ENCODE measurements at regions of chr6 and their contacts with region 1.

Region 1: DNA sequence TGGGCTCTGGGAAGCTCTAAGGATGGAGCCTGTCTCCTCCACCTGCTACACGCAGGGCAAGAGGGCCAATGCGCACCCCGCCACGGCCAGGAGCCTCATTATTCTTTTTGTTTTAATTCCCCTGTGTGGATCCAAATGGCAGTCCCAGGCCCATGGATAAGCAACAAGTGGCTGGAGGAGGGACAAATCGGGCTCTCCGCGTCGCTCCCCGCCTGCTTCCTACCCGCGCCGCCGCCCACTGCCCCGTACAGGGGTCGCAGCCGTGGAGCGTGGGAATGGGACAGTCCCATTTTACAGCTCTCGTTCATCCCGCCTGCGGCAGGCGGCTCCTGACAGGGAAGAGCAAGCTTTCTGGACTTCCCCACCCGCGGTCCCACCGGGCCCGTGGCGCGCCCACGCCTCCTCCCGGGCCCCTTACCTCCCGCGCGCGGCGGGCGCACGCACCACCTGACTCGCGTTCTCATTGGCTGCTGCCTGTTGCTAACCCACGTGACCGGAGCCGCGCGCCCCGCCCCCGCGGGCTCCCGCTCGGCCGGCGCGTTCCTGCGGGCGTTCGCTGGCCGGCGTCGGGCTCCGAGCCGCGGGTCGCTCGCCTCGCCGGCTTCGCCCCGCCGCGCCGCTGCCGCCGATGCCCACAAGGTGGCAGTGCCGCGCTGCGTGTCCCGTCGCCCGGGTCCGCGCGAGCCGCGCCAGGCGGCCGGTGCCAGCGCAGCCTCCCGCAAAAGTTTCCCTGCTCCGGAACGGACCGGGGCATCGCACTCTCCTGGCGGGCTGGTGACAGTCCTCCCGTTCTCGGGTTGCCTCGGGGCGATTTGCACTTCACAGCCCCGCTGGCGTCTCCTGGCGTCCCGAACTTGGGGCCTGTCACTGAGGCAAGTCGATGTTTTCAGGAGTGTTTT is 93.3 kb downstream of the CD83 start:
- DNase-seq: peak; percentile 95 to 98 (median 98)
- ATAC-seq: peak; percentile 97
- H3K4me3 ChIP-seq: peak overlapping the region; percentile 71
- H3K27ac ChIP-seq: peak overlapping the region; percentile 78
- H3K4me1 ChIP-seq: peaks cover 6% of the 10 kb centered on the region
- H3K27me3 ChIP-seq: no peaks in the 10 kb centered on the region

Region 2: GRCh38 chr6:14423330-14423729 is 212.4 kb after region 1 on chr6:
- intact Hi-C with region 1: loop called in 1 of 4 experiments (anchors 10 kb)
- DNase-seq: peak in 1 of 3 donors; percentile 28
- ATAC-seq: peak; percentile 81 to 97
- H3K4me3 ChIP-seq: no peak overlapping the region
- H3K27ac ChIP-seq: no peak overlapping the region
- H3K4me1 ChIP-seq: no peaks in the 10 kb centered on the region
- H3K27me3 ChIP-seq: no peaks in the 10 kb centered on the region

Region 3: DNA sequence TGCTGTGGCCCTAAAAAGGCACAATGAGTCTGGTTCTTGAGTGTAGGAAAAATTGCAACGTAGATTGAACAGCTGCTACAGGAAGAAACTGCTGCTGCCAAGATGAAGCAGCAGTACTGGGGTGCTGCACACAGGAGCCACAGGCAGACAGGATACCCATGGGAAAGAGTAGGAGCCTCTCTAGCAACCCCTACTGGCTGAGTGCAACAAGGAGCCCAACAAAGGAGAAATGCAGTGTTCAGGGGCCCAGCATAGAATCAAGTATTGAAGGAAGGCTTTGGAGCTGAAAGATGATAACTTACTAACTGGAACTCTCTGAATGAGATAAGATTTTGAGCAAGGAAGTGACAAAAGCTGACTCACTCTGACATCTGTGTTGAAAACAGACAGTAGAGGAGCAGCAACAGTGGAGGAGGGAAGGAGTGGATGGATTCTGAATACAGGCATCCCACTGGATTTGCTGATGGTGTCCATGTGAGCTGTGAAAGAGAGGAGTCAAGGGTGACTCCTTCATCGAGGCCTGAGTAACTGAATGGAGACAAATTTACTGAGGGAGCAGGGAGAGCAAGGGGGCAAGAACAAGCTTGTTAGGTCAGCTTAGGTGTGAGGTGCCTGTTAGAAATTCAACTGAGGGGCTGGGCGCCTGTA is 500.3 kb after region 1 on chr6:
- intact Hi-C with region 1: loop called in 1 of 4 experiments (anchors 10 kb)
- DNase-seq: no peak
- ATAC-seq: peak in 1 of 2 donors; percentile 49
- H3K4me3 ChIP-seq: no peak overlapping the region
- H3K27ac ChIP-seq: no peak overlapping the region
- H3K4me1 ChIP-seq: peaks cover 11% of the 10 kb centered on the region
- H3K27me3 ChIP-seq: no peaks in the 10 kb centered on the region

Region 4: DNA sequence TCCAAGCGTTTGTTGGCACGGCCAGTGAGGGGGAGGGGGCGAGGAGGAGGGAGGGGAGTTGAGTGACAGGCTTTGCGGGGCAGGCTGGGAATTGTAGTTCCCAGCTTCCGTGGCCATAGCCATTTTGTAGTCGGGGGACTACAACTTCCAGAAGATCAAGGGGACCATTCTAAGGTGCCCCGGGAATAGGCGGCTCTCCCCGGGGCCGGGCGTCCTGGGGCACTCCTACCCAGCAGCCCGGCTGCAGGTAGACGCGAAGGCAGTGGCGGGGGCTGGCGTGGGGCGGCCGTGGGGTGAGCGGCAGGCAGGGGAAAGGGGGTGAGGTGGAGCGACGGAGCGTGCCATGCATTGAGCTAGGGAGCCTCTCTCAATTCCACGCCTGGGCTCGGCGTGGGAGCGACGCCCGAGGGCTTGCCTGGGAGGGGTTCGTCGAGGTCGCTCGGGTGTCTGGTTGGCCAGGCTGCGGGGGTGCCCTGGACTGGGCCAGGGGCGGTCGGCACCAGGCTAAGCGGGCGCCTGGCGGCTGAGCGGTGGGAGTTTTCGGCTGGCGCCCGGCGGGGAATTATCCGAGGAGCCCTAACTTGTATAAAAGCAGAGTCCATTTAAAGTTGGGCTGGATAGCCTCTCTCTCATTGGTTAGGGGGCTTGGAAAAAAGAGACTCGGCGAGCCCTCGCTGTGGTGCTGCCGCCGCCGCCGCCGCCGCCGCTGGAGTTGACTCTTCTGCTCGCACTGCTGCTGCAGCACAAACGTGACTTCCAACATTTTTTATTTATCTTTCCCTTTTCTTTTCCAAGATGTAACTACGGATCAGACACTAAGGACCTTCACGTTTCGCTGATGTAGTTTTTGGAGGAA is 1034.7 kb after region 1 on chr6 and contains the start of gene JARID2:
- intact Hi-C with region 1: loop called in 1 of 4 experiments (anchors 10 kb)
- DNase-seq: peak; percentile 99 to 100 (median 100)
- ATAC-seq: peak; percentile 91 to 92
- H3K4me3 ChIP-seq: peak within 1 kb of the TSS; percentile 89
- H3K27ac ChIP-seq: peak within 1 kb of the TSS; percentile 95
- H3K4me1 ChIP-seq: no peaks in the 10 kb centered on the region
- H3K27me3 ChIP-seq: no peaks in the 10 kb centered on the region
- total RNA-seq, gene JARID2: 6.8 to 10.1 (median 9.4) TPM

Region 5: DNA sequence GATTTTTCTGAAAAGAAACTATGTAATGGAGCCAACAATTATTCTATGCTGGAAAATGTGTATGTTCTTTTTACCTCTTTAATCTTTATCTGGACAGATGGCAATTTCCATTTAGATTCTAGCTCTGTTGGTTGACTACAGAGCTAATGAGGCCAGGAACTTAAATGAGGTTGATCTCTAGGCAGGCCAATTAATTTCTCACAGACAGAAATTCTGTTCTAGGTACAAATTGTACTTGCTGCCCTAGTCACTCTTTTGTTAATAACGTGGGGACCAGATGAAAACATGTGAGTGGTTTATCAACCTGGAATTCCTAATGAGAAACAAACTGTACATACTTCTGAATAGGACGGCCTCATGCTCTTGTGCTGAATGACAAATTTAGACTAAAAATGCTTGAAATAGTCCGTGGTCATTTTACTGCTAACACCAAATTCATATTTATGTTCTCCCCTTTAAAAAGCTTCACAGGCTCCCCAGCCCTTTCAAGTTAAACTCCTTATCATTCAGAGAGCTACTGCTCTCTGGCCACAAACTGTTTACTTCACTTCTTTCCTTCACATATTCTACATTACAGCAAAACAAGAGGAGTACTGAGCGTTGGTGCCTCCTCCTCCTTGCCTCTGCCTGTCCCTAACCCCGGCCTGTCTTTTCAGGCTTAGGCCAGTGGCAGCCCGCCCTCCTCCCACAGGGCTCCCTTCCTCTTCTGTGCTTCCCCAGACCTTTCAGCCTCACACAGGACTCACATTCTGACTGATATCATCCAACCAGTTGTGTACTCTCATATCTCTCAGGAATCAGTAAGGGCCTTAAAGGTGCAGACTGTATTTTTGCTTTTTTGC is 1410.5 kb after region 1 on chr6:
- intact Hi-C with region 1: loop called in 1 of 4 experiments (anchors 10 kb)
- DNase-seq: peak; percentile 41 to 81 (median 76)
- ATAC-seq: peak; percentile 85 to 93
- H3K4me3 ChIP-seq: no peak overlapping the region
- H3K27ac ChIP-seq: peak overlapping the region; percentile 97
- H3K4me1 ChIP-seq: peaks cover 2% of the 10 kb centered on the region
- H3K27me3 ChIP-seq: no peaks in the 10 kb centered on the region